ENCODE measurements at regions of chr15 and their contacts with region 1.

Region 1: GRCh38 chr15:63291507-63291906 is 14.1 kb downstream of the APH1B start:
- DNase-seq: no peak
- H3K4me3 ChIP-seq: no peak overlapping the region
- H3K27ac ChIP-seq: no peak overlapping the region
- H3K4me1 ChIP-seq: peaks cover 0 to 6% of the 10 kb centered on the region in 2 donors
- H3K27me3 ChIP-seq: no peaks in the 10 kb centered on the region
- CTCF ChIP-seq: no peak
- POLR2A ChIP-seq: no peak

Region 2: GRCh38 chr15:62809112-62809967 is 482.2 kb before region 1 on chr15:
- intact Hi-C with region 1: no loop called
- DNase-seq: no peak
- H3K4me3 ChIP-seq: no peak overlapping the region
- H3K27ac ChIP-seq: no peak overlapping the region
- H3K4me1 ChIP-seq: no peaks in the 10 kb centered on the region
- H3K27me3 ChIP-seq: no peaks in the 10 kb centered on the region
- CTCF ChIP-seq: no peak
- POLR2A ChIP-seq: no peak

Region 3: DNA sequence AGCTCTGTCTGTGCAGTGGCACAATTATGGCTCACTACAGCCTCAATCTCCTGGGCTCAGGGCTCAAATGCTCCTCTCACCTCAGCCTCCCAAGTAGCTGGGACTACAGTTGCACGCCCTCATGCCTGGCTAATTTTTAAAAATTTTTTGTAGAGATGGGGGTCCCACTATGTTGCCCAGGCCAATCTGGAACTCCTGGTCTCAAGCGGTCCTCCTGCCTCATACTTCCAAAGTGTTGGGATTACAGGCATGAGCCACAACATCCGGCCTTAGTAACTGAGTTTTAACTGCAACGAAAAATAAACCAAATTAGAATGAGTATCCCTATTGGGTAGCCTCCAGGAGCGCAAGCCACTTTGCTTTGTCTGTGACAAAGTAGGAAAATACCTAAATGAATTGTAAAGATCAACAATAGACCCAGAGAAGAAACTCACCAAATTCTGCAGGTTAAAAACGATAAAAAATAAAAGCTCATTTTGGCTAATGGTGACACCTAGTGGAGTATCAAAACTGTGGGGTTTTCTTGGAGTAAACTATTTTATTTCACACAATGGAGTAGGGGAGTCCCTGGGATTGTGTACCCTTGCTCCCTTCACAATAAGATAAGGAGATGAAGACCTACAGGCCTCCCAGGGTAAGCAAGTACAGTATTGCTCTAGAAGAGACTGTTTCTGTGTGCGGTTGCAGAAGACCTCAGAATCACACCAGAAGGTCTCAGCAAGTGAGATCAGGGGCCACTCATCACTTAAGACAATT is 111.2 kb after region 1 on chr15:
- intact Hi-C with region 1: loop called (anchors 2 kb)
- DNase-seq: no peak
- H3K4me3 ChIP-seq: no peak overlapping the region
- H3K27ac ChIP-seq: no peak overlapping the region
- H3K4me1 ChIP-seq: no peaks in the 10 kb centered on the region
- H3K27me3 ChIP-seq: no peaks in the 10 kb centered on the region
- CTCF ChIP-seq: peak; percentile 26 to 80 (median 52)
- POLR2A ChIP-seq: no peak

Measured in thyroid gland (tissue), 4 donors.